Dendritic cell treated with granulocyte-macrophage colony-stimulating factor and Interleukin-4, amounts not matched to agents 40 ng/mL and 50 ng/mL, for 4 days (primary cell): ENCODE measurements at regions of chr7 and their contacts with region 1.

Region 1: DNA sequence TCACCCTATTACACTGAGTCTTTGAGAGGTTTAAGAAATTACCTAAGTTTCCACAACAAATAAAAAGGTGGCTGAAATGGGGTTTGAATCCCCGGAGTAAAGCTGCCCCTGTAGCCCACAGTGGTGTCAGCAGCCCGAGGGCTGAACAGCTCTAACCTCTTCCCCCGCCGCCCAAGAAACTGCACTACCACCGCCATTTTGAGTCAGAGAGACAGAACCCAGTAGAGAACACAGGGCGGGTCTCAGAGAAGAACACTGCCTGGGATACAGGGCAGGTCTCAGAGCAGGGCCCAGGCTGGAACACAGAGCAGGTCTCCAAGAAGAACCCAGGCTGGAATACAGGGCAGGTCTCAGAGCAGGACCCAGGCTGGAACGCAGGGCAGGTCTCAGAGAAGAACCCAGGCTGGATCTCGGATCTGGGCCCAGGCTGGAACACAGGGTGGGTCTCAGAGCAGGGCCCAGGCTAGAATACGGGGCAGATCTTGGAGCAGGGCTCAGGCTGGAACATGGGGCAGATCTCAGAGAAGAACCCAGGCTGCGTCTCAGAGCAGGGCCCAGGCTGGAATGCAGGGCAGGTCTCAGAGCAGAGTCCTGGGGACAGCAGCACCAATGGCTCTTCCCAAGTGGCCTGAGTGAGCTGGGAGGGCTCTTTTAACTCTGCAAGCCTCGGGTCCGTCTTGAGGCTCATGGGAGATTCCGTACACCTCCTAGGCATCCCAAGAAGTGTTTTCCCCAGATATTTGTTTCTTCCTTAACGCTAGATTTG is 85.9 kb upstream of the LANCL2 start:
- H3K4me3 Mint-ChIP-seq: no peak overlapping the region
- H3K27ac Mint-ChIP-seq: no peak overlapping the region
- H3K4me1 Mint-ChIP-seq: no peaks in the 10 kb centered on the region
- H3K27me3 Mint-ChIP-seq: no peaks in the 10 kb centered on the region

Region 2: GRCh38 chr7:55223023-55223422 is 56.2 kb before region 1 on chr7:
- intact Hi-C with region 1: no loop called
- H3K4me3 Mint-ChIP-seq: no peak overlapping the region
- H3K27ac Mint-ChIP-seq: no peak overlapping the region
- H3K4me1 Mint-ChIP-seq: no peaks in the 10 kb centered on the region
- H3K27me3 Mint-ChIP-seq: no peaks in the 10 kb centered on the region

Region 3: DNA sequence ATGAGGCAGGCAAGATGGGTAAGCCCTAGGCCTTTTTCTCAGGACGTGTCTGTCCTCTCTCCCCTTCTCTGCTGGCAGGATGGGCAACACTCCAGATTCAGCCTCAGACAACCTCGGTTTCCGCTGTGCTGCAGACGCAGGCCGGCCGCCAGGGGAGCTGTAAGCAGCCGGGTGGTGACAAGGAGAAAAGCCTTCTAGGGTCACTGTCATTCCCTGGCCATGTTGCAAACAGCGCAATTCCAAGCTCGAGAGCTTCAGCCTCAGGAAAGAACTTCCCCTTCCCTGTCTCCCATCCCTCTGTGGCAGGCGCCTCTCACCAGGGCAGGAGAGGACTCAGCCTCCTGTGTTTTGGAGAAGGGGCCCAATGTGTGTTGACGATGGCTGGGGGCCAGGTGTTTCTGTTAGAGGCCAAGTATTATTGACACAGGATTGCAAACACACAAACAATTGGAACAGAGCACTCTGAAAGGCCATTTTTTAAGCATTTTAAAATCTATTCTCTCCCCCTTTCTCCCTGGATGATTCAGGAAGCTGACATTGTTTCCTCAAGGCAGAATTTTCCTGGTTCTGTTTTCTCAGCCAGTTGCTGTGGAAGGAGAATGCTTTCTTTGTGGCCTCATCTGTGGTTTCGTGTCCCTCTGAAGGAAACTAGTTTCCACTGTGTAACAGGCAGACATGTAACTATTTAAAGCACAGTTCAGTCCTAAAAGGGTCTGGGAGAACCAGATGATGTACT is 800.4 kb after region 1 on chr7:
- intact Hi-C with region 1: loop called (anchors 5 kb)
- H3K4me3 Mint-ChIP-seq: no peak overlapping the region
- H3K27ac Mint-ChIP-seq: no peak overlapping the region
- H3K4me1 Mint-ChIP-seq: no peaks in the 10 kb centered on the region
- H3K27me3 Mint-ChIP-seq: no peaks in the 10 kb centered on the region